Activated T-helper 1 cell treated with anti-CD3 and anti-CD28 coated beads, Interleukin-12 subunit alpha, Interleukin-12 subunit beta, Interleukin-2, Interleukin-4 antibody, amounts not matched to agents 30 ng/mL and 10 ng/mL and 1 ng/mL, durations not matched to agents 14 hours and 24 hours and 36 hours (primary cell): ENCODE measurements at regions of chr11 and their contacts with region 1.

Region 1: GRCh38 chr11:2377511-2378443 is 667 bp downstream of the CD81 start:
- DNase-seq: peak; percentile 44
- H3K4me3 Mint-ChIP-seq: peak overlapping the region; percentile 90
- H3K27ac Mint-ChIP-seq: peak overlapping the region; percentile 87
- H3K4me1 Mint-ChIP-seq: peaks cover 10% of the 10 kb centered on the region
- H3K27me3 Mint-ChIP-seq: peaks cover 4% of the 10 kb centered on the region

Region 2: GRCh38 chr11:2208691-2209369 is 168.9 kb before region 1 on chr11:
- intact Hi-C with region 1: no loop called
- DNase-seq: no peak
- H3K4me3 Mint-ChIP-seq: no peak overlapping the region
- H3K27ac Mint-ChIP-seq: no peak overlapping the region
- H3K4me1 Mint-ChIP-seq: peaks cover 6% of the 10 kb centered on the region
- H3K27me3 Mint-ChIP-seq: no peaks in the 10 kb centered on the region

Region 3: GRCh38 chr11:2269601-2270321 is 108.0 kb before region 1 on chr11:
- intact Hi-C with region 1: loop called (anchors 1 kb)
- DNase-seq: peak; percentile 25
- H3K4me3 Mint-ChIP-seq: no peak overlapping the region
- H3K27ac Mint-ChIP-seq: no peak overlapping the region
- H3K4me1 Mint-ChIP-seq: peaks cover 16% of the 10 kb centered on the region
- H3K27me3 Mint-ChIP-seq: peaks cover 32% of the 10 kb centered on the region

Region 4: GRCh38 chr11:2348986-2349385 is 28.8 kb before region 1 on chr11:
- intact Hi-C with region 1: no loop called
- DNase-seq: no peak
- H3K4me3 Mint-ChIP-seq: no peak overlapping the region
- H3K27ac Mint-ChIP-seq: no peak overlapping the region
- H3K4me1 Mint-ChIP-seq: no peaks in the 10 kb centered on the region
- H3K27me3 Mint-ChIP-seq: peaks cover 3% of the 10 kb centered on the region

Region 5: GRCh38 chr11:2444821-2445745 is 67.3 kb after region 1 on chr11 and contains the start of gene KCNQ1:
- intact Hi-C with region 1: loop called (anchors 1 kb)
- DNase-seq: peak; percentile 49
- H3K4me3 Mint-ChIP-seq: peak within 1 kb of the TSS; percentile 88
- H3K27ac Mint-ChIP-seq: peak within 1 kb of the TSS; percentile 65
- H3K4me1 Mint-ChIP-seq: peaks cover 27% of the 10 kb centered on the region
- H3K27me3 Mint-ChIP-seq: peaks cover 14% of the 10 kb centered on the region
- total RNA-seq, gene KCNQ1: 5.3 and 6.4 TPM in 2 replicates

Region 6: DNA sequence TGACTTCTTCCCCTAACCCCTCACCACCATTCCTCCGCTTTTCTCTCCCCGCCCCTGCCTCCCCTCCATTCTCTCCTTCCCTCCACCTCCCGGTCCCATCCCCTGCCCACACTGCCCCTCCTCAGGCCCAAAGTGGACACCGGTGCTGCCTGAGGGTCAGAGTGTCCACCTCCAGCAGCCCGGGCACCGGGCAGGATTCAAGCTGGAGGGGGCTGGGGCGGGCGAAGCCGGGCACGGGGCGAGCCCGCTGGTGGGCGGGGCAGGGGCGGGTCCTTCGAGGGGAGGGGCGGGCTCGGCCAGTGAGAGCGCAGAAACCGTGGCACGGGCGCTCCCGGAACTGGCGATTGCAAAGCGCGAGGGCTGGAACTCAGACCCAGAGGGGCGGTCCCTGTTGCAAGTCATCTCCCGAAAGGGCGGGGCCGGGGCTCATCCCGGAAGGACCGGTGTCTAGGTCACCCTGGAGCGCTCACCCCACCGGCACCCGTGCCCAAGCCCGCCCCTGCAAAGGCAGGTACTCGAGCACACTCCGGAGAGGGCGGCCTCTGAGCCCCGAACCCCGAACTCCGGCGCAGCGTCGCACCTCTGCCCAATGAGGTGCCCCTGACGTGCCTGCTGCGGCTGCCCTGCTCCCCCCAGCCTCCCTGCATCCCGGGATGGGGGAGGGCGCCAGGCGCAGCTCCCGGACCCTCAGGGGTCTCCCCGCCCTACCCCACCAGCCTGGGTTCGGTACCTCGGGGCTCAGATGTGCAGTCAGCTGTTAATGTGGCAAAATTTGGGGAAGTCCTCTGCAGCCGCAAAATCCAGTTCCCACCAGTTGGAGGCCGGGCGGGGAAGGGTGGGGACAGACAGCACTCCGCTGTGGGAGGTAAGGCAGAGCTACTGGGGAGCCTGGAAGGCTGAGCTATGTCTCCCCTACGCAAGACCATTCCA is 524.3 kb after region 1 on chr11:
- intact Hi-C with region 1: loop called (anchors 1 kb)
- DNase-seq: peak; percentile 93
- H3K4me3 Mint-ChIP-seq: peak overlapping the region; percentile 72
- H3K27ac Mint-ChIP-seq: no peak overlapping the region
- H3K4me1 Mint-ChIP-seq: peaks cover 41% of the 10 kb centered on the region
- H3K27me3 Mint-ChIP-seq: no peaks in the 10 kb centered on the region